Posterior cingulate gyrus (tissue), 11 donors: ENCODE measurements at regions of chr5 and their contacts with region 1.

Region 1: DNA sequence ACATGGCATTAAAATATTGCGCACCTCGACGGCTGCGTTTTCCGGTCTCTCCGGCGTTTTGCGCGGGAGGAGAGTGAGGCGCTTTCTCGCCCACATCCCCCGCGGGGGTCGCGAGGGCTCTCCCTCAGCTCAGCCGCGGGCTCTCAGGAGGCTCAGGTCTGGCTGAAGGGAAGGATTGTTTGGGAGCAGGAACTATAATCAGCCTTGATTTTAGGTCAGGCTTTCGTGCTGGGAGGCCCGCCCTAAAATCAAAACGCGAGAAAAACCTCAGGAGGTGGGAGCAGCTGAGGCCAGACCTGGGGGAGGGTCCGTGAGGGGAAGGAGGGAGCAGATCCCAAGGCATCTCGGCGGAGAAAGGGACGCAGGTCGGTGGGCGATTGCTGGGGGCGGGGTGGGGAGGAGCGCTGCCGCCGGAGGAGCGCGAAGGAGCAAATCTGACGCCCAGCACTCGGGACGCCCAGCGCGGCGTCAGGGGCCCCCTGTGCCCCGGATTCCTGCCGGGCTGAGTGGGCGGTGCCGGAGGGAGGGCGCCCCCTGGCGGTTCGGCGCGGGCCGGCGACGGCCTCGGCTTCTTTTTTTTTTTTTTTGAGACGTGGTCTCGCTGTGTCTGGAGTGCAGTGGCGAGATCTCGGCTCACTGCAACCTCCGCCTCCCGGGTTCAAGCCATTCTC is 18.7 kb upstream of the RNF130 start:
- DNase-seq: peak in 8 of 10 donors; percentile 47 to 96 (median 64)

Region 2: DNA sequence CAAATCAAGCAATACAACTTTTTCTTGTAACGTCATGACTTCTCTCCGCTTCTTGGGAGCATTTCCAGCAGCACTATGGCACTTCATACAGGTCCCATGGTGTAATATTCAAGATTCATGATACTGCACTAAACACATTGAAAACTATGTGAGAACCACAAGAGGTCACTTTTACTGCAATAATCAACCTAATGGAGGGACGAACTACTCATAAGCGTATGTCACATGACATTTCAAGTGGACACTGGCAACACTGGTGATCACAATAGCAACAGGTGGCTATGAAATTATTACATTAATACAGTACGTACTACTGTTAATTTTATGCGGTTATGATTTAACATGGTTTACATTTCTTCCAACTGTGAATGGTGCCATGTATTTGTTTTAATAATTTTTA is 103.9 kb before region 1 on chr5:
- intact Hi-C with region 1: loop called (anchors 1 kb)
- DNase-seq: no peak

Region 3: DNA sequence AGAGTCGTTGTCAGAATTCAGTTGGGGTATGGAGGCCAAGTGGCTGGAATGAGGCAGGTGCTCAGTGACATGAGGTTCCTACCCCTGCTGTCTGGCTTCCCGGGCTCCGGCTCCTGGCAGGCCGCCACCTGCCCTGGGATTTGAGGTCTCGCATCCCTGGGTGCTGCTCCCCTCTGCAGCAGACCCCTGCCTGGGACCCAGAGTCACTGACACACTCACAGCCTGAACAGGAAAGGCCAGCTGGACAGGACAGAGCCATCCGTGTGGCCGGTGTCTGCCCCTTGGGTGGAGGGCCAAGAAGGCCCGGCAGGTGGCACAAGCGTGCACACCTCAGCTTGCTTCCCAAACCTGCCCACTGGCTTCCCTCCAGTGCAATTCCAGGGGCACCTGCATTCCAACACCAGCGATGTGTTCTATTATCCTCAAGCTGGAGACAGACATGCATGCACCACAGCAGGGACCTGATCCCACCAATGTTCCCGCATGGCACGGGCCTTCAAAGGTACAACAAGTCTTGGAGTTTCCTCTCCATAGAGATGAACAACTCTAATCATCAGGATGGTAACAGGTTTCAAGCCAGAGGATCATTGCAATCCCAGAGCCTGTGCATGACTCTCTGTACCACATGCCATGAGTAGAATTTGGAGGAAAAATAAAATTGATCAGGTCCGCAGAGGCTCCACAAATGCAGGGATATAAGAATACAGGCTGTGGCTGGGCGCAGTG is 26.9 kb after region 1 on chr5:
- intact Hi-C with region 1: no loop called
- DNase-seq: peak in 4 of 10 donors; percentile 7 to 83 (median 71)

Region 4: GRCh38 chr5:180470966-180471582 is 380.8 kb after region 1 on chr5:
- intact Hi-C with region 1: no loop called
- DNase-seq: peak in 9 of 10 donors; percentile 52 to 95 (median 75)